Endothelial cell of umbilical vein (primary cell): ENCODE measurements at regions of chr9 and their contacts with region 1.

Region 1: GRCh38 chr9:35996358-35996975 is 38.5 kb upstream of the OR2S2 start:
- DNase-seq: no peak
- H3K4me3 ChIP-seq: no peak overlapping the region
- H3K27ac ChIP-seq: no peak overlapping the region
- H3K4me1 ChIP-seq: no peaks in the 10 kb centered on the region
- H3K27me3 ChIP-seq: peaks cover 2 to 4% of the 10 kb centered on the region in 2 experiments
- CTCF ChIP-seq: no peak
- POLR2A ChIP-seq: no peak

Region 2: DNA sequence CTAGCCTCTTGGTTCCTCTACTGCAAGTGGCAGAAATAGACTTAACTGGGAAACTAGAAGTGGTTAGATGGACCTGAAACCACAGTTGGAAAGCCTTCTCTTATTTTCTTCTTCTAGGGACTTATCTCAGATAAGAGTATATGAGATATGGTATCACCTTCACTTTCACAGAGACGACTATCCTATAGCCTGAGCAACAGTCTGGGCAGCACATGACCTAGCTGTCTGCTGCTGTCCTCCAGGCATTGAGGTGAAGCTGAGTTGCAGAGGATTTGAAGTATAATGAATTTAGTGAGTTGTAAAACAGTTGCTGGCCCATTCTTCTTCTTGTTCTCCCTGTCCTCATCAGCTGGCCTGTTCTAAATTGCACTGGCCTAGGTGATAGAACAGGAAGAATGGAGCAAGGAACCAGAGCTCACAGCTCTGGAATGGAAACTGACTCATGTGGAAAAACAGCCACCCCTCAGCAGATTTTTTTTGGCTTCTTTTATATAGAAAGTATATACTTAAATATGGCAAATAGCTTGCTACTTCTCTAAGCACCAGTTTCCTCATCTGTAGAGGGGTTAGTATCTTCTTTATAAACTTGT is 68.1 kb after region 1 on chr9:
- CTCF ChIA-PET with region 1: no interaction called
- POLR2A ChIA-PET with region 1: no interaction called
- dilution Hi-C with region 1: no loop called
- intact Hi-C with region 1: no loop called
- DNase-seq: peak; percentile 38
- H3K4me3 ChIP-seq: no peak overlapping the region
- H3K27ac ChIP-seq: no peak overlapping the region
- H3K4me1 ChIP-seq: peaks cover 3% of the 10 kb centered on the region
- H3K27me3 ChIP-seq: no peaks in the 10 kb centered on the region
- CTCF ChIP-seq: no peak
- POLR2A ChIP-seq: no peak

Region 3: DNA sequence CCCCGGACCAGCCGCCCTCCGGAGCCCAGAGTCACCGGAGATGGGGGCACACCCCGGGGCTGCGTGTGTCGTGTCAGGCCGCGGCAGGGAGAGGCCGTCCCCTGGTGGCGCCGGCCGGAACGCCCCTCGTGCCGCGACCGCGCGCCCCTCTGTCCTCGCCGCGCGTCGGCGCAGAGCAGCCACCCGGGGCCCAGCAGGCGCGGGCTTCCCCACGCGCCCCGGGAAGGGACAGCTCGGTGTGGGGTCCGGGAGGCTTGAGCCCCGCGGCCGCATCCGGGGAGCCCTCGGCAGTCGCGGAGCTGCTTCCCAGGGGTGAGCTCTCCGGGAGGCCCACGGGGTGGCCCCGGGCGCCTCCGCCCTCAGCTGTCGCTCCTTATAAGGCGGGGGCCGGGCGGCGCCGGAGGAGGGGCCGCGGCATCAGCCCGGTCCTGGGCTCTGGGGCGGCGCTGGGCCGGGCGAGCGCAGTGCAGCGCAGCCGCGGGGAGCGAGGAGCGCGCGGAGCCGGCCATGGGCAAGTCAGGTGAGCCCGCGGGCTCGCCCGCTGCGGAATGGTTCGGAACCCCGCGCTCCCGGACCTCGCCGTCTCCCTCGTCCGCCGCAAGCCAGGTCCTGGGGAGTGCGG is 139.9 kb after region 1 on chr9 and contains the start of gene GLIPR2:
- CTCF ChIA-PET with region 1: no interaction called
- POLR2A ChIA-PET with region 1: no interaction called
- dilution Hi-C with region 1: no loop called
- intact Hi-C with region 1: no loop called
- DNase-seq: peak; percentile 55
- H3K4me3 ChIP-seq: peak within 1 kb of the TSS; percentile 40 to 62 (median 61)
- H3K27ac ChIP-seq: peak within 1 kb of the TSS; percentile 16
- H3K4me1 ChIP-seq: peaks cover 11% of the 10 kb centered on the region
- H3K27me3 ChIP-seq: no peaks in the 10 kb centered on the region
- CTCF ChIP-seq: peak; percentile 12 to 23
- POLR2A ChIP-seq: no peak
- total RNA-seq, gene GLIPR2: 20.0 and 22.0 TPM in 2 replicates

Region 4: DNA sequence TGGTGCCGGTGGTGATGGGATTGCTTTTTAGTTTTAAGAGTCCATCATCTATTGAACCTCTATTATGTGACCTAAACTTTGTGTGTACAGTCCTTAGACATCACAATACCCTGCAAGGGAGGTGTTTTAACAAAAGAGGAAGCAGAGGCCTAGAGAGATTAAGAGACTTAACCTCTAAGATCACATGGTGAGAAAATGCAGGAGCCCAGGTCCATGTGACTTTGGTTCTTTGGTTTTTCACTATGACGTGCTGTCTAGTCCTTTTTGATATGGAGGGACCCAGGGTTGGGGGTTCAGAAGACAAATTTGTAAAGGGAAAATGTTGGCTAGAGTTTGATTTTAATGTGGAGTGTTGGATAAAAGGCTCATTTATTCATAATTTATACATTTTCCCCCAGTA is 1723.1 kb after region 1 on chr9:
- CTCF ChIA-PET with region 1: no interaction called
- POLR2A ChIA-PET with region 1: no interaction called
- dilution Hi-C with region 1: no loop called
- intact Hi-C with region 1: loop called (anchors 10 kb)
- DNase-seq: no peak
- H3K4me3 ChIP-seq: no peak overlapping the region
- H3K27ac ChIP-seq: no peak overlapping the region
- H3K4me1 ChIP-seq: no peaks in the 10 kb centered on the region
- H3K27me3 ChIP-seq: peaks cover 4 to 8% of the 10 kb centered on the region in 2 experiments
- CTCF ChIP-seq: no peak
- POLR2A ChIP-seq: no peak